ENCODE measurements at regions of chr18 and their contacts with region 1.

Region 1: DNA sequence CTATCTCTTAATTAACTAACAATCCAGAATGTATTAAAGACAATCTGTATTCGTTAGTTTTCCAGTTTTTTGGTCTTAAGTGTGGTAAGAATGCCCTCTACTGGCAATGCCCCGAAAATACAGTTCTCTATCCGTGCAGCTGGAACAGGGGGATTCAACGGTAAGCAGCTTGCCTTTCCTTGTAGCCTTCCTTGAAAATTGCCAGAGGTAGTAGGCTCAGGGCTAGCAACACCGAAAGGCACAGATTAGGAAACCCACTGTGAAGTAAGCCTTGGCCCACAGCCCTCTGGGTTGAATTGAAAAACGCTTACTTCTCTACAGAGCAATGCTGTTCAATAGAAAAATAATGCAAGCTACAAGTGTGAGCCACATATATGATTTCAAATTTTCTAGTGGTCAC is 17.1 kb upstream of the VPS4B start:
- DNase-seq: peak in 4 of 5 donors; percentile 51 to 80 (median 72)
- H3K4me3 ChIP-seq: no peak overlapping the region
- H3K27ac ChIP-seq: no peak overlapping the region
- H3K4me1 ChIP-seq: no peaks in the 10 kb centered on the region
- H3K27me3 ChIP-seq: no peaks in the 10 kb centered on the region
- CTCF ChIP-seq: peak; percentile 83

Region 2: GRCh38 chr18:63339920-63340484 is 99.3 kb before region 1 on chr18:
- intact Hi-C with region 1: loop called (anchors 10 kb)
- DNase-seq: peak in 3 of 5 donors; percentile 21 to 62 (median 48)
- H3K4me3 ChIP-seq: no peak overlapping the region
- H3K27ac ChIP-seq: no peak overlapping the region
- H3K4me1 ChIP-seq: peaks cover 0 to 2% (median 0%) of the 10 kb centered on the region in 3 donors
- H3K27me3 ChIP-seq: no peaks in the 10 kb centered on the region
- CTCF ChIP-seq: peak; percentile 29